ENCODE measurements at regions of chr19 and their contacts with region 1.

Region 1: GRCh38 chr19:12777217-12778016 is 2.1 kb upstream of the HOOK2 start:
- DNase-seq: peak; percentile 89
- H3K4me3 ChIP-seq: peak overlapping the region; percentile 52 to 64
- H3K27ac ChIP-seq: peak overlapping the region; percentile 90 to 98
- H3K4me1 ChIP-seq: peaks cover 24 to 41% of the 10 kb centered on the region in 2 experiments; a peak in 3 of 4 replicates
- H3K27me3 ChIP-seq: no peaks in the 10 kb centered on the region
- CTCF ChIP-seq: peak; percentile 93
- EP300 ChIP-seq: no peak; a peak in 1 of 4 replicates
- RAD21 ChIP-seq: peak; percentile 83

Region 2: GRCh38 chr19:12656899-12657571 is 120.4 kb before region 1 on chr19:
- CTCF ChIA-PET with region 1: no interaction called
- POLR2A ChIA-PET with region 1: no interaction called
- DNase-seq: peak; percentile 86
- H3K4me3 ChIP-seq: no peak overlapping the region
- H3K27ac ChIP-seq: no peak overlapping the region
- H3K4me1 ChIP-seq: no peaks in the 10 kb centered on the region
- H3K27me3 ChIP-seq: no peaks in the 10 kb centered on the region
- CTCF ChIP-seq: no peak
- EP300 ChIP-seq: no peak
- RAD21 ChIP-seq: no peak

Region 3: DNA sequence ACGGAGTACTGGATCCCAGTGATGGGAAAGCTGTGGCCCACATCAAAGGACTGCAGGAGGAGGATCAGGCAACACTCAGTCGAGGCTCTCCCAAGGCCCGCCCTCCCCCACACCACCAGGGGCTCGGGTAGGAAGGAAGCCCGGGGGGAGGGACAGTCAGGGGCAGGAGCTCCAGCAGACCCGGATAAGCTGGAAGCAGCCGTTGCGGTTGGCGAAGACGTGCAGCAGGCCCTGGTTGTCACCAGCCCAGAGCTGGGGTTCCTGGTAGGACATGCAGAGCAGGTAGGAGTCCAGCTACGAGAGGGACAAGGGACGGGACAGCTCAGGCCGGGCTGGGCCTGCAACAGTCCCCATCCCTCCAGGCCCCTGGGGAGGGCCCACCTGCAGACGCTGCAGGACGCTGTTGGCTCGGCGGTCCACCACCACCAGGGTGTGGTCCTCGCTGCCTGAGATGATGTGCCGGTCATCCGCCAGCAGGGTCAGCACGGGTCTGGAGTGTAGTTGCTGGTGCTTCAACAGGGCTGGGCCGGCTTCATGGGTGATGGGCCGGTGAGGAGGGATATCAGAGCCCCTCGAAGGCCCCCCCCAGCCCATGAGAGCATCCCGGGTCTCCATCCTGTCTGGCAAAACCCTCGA is 87.7 kb before region 1 on chr19:
- CTCF ChIA-PET with region 1: no interaction called
- POLR2A ChIA-PET with region 1: no interaction called
- DNase-seq: no peak
- H3K4me3 ChIP-seq: no peak overlapping the region
- H3K27ac ChIP-seq: no peak overlapping the region
- H3K4me1 ChIP-seq: peaks cover 0 to under 1% of the 10 kb centered on the region in 2 experiments; a peak in 1 of 4 replicates
- H3K27me3 ChIP-seq: no peaks in the 10 kb centered on the region
- CTCF ChIP-seq: no peak
- EP300 ChIP-seq: no peak
- RAD21 ChIP-seq: no peak

Region 4: GRCh38 chr19:12703046-12703445 is 74.4 kb before region 1 on chr19:
- CTCF ChIA-PET with region 1: no interaction called
- POLR2A ChIA-PET with region 1: no interaction called
- DNase-seq: peak; percentile 90
- H3K4me3 ChIP-seq: no peak overlapping the region
- H3K27ac ChIP-seq: no peak overlapping the region
- H3K4me1 ChIP-seq: no peaks in the 10 kb centered on the region
- H3K27me3 ChIP-seq: no peaks in the 10 kb centered on the region
- CTCF ChIP-seq: no peak
- EP300 ChIP-seq: no peak
- RAD21 ChIP-seq: no peak

Region 5: DNA sequence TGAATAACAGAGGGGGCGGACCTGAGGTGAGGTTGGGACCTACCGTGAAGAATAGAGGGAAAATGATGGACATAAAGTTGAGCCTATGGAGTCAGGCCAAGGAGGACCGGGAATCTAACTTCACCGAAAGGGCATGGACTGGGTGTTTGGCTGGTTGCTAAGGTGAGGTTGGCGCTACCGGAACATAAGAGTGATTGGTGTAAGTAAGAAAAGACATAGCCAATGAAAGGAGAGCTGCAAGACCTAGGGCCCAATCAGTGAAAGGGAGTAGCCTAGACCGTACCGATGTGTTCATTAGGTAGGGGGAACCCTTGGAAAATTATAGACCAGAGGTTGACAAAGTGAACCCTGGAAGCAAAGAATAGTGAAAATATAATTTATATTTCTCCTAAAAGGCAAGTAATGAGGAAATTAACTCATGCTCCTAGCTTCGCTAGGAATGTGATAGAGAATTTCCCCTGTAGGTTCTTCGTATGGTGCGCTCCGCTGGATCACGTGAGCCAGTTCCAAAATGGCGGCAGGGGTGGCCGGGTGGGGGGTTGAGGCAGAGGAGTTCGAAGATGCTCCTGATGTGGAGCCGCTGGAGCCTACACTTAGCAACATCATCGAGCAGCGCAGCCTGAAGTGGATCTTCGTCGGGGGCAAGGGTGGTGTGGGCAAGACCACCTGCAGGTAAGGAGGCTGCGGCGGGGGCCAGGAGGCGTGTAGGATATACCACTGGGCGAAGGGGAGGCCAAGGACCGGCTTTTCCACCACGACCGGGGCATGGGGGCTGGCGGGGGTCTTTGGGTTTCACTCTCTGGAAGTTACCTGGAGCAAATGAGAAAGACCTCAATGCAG is 40.2 kb before region 1 on chr19 and contains the start of gene GET3:
- CTCF ChIA-PET with region 1: interaction called, 17 read pairs
- POLR2A ChIA-PET with region 1: interaction called, 3 read pairs
- DNase-seq: peak; percentile 86
- H3K4me3 ChIP-seq: peak within 1 kb of the TSS; percentile 83 to 84
- H3K27ac ChIP-seq: peak within 1 kb of the TSS; percentile 84 to 96
- H3K4me1 ChIP-seq: peaks cover 9 to 28% of the 10 kb centered on the region in 2 experiments; a peak in 1 of 4 replicates
- H3K27me3 ChIP-seq: no peaks in the 10 kb centered on the region
- CTCF ChIP-seq: no peak
- EP300 ChIP-seq: no peak
- RAD21 ChIP-seq: no peak
- polyA plus RNA-seq, gene GET3: 250 and 264 TPM in 2 replicates

Region 6: GRCh38 chr19:12766051-12766521 is 11.3 kb before region 1 on chr19:
- CTCF ChIA-PET with region 1: interaction called, 38 read pairs
- POLR2A ChIA-PET with region 1: no interaction called
- DNase-seq: no peak
- H3K4me3 ChIP-seq: no peak overlapping the region
- H3K27ac ChIP-seq: no peak overlapping the region
- H3K4me1 ChIP-seq: peaks cover 0 to 3% of the 10 kb centered on the region in 2 experiments; a peak in 1 of 4 replicates
- H3K27me3 ChIP-seq: no peaks in the 10 kb centered on the region
- CTCF ChIP-seq: no peak
- EP300 ChIP-seq: no peak
- RAD21 ChIP-seq: no peak

Region 7: GRCh38 chr19:12796146-12797071 is 19.0 kb after region 1 on chr19:
- CTCF ChIA-PET with region 1: interaction called, 447 read pairs
- POLR2A ChIA-PET with region 1: interaction called, 88 read pairs
- DNase-seq: peak; percentile 77
- H3K4me3 ChIP-seq: peak overlapping the region in 1 of 2 experiments; percentile 38; a peak in 1 of 4 replicates
- H3K27ac ChIP-seq: peak overlapping the region in 1 of 2 experiments; percentile 36; a peak in 1 of 4 replicates
- H3K4me1 ChIP-seq: peaks cover 9 to 23% of the 10 kb centered on the region in 2 experiments; a peak in 1 of 4 replicates
- H3K27me3 ChIP-seq: no peaks in the 10 kb centered on the region
- CTCF ChIP-seq: peak; percentile 87
- EP300 ChIP-seq: no peak
- RAD21 ChIP-seq: peak; percentile 99

Region 8: DNA sequence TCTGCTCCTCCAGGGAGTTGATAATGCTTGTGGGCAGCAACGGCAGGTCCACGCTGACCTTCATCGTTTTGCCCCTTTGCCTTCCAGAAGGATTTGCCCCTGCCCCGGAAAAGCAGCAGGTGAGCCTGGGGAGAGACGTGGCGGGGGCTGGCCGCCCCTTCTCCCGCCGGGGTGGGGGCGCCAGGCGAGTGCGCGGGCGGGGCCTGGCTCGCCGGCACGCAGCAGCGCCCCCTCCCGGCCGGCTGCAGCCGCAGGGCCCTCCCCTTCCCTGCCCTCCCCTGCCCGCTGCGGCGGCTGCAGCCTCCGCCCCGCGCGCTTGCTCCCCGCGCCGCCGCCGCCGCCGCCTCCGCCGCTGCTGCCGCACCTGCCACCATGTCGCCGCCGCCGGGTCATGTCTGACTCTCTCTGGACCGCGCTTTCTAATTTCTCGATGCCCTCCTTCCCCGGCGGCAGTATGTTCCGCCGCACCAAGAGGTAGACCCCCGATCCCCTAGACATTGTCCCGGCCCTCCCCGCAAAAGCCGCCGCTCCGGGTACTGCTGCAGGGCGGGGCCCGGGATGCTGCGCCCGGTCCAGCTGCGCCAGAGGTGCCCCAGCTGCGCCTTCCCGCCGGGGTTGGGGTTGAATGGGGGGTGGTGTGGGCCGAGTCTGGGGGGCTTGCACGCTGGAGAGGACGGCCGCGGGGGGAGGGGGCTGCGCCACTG is 60.9 kb after region 1 on chr19 and contains the start of gene MAST1:
- CTCF ChIA-PET with region 1: interaction called, 15 read pairs
- POLR2A ChIA-PET with region 1: no interaction called
- DNase-seq: peak; percentile 94
- H3K4me3 ChIP-seq: peak within 1 kb of the TSS; percentile 73 to 81
- H3K27ac ChIP-seq: peak within 1 kb of the TSS in 1 of 2 experiments; percentile 76; a peak in 2 of 4 replicates
- H3K4me1 ChIP-seq: peaks cover under 1 to 47% of the 10 kb centered on the region in 2 experiments; a peak in 2 of 4 replicates
- H3K27me3 ChIP-seq: no peaks in the 10 kb centered on the region
- CTCF ChIP-seq: peak; percentile 60
- EP300 ChIP-seq: no peak
- RAD21 ChIP-seq: peak; percentile 28; the same call in 1 of the 2 replicates
- polyA plus RNA-seq, gene MAST1: 4.3 and 9.7 TPM in 2 replicates

Region 9: GRCh38 chr19:12983542-12984142 is 206.2 kb after region 1 on chr19:
- CTCF ChIA-PET with region 1: no interaction called
- POLR2A ChIA-PET with region 1: no interaction called
- DNase-seq: peak; percentile 98
- H3K4me3 ChIP-seq: peak overlapping the region; percentile 34 to 39; a peak in 3 of 4 replicates
- H3K27ac ChIP-seq: peak overlapping the region in 1 of 2 experiments; percentile 2; a peak in 1 of 4 replicates
- H3K4me1 ChIP-seq: peaks cover 0 to 8% of the 10 kb centered on the region in 2 experiments; a peak in 1 of 4 replicates
- H3K27me3 ChIP-seq: no peaks in the 10 kb centered on the region
- CTCF ChIP-seq: peak; percentile 88
- EP300 ChIP-seq: no peak
- RAD21 ChIP-seq: peak; percentile 82